ENCODE measurements at regions of chr5 and their contacts with region 1.

Region 1: GRCh38 chr5:157088342-157088990 is 20.4 kb downstream of the HAVCR2 start:
- DNase-seq: no peak
- H3K4me3 ChIP-seq: no peak overlapping the region
- H3K4me3 Mint-ChIP-seq: no peak overlapping the region
- H3K27ac ChIP-seq: peak overlapping the region in 1 of 2 donors; percentile 17
- H3K27ac Mint-ChIP-seq: peak overlapping the region in 1 of 7 donors; percentile 26
- H3K4me1 ChIP-seq: no peaks in the 10 kb centered on the region
- H3K4me1 Mint-ChIP-seq: peaks cover 3% of the 10 kb centered on the region
- H3K27me3 ChIP-seq: no peaks in the 10 kb centered on the region
- H3K27me3 Mint-ChIP-seq: peaks cover 0 to 1% (median 0%) of the 10 kb centered on the region in 3 donors
- CTCF ChIP-seq: no peak

Region 2: GRCh38 chr5:157030692-157031091 is 57.8 kb before region 1 on chr5:
- intact Hi-C with region 1: no loop called
- DNase-seq: no peak
- H3K4me3 ChIP-seq: no peak overlapping the region
- H3K4me3 Mint-ChIP-seq: no peak overlapping the region
- H3K27ac ChIP-seq: no peak overlapping the region
- H3K27ac Mint-ChIP-seq: no peak overlapping the region
- H3K4me1 ChIP-seq: no peaks in the 10 kb centered on the region
- H3K4me1 Mint-ChIP-seq: no peaks in the 10 kb centered on the region
- H3K27me3 ChIP-seq: no peaks in the 10 kb centered on the region
- H3K27me3 Mint-ChIP-seq: peaks cover 6 to 12% (median 12%) of the 10 kb centered on the region in 3 donors
- CTCF ChIP-seq: no peak

Region 3: GRCh38 chr5:157130925-157131324 is 42.5 kb after region 1 on chr5:
- intact Hi-C with region 1: loop called (anchors 5 kb)
- DNase-seq: peak; percentile 43 to 61 (median 51)
- H3K4me3 ChIP-seq: no peak overlapping the region
- H3K4me3 Mint-ChIP-seq: no peak overlapping the region
- H3K27ac ChIP-seq: no peak overlapping the region
- H3K27ac Mint-ChIP-seq: peak overlapping the region in 1 of 7 donors; percentile 63
- H3K4me1 ChIP-seq: peaks cover 0 to 6% of the 10 kb centered on the region in 2 donors
- H3K4me1 Mint-ChIP-seq: peaks cover 28% of the 10 kb centered on the region
- H3K27me3 ChIP-seq: no peaks in the 10 kb centered on the region
- H3K27me3 Mint-ChIP-seq: peaks cover 0 to 8% (median 0%) of the 10 kb centered on the region in 3 donors
- CTCF ChIP-seq: no peak